Psoas muscle (tissue), 8 donors: ENCODE measurements at regions of chr13 and their contacts with region 1.

Region 1: DNA sequence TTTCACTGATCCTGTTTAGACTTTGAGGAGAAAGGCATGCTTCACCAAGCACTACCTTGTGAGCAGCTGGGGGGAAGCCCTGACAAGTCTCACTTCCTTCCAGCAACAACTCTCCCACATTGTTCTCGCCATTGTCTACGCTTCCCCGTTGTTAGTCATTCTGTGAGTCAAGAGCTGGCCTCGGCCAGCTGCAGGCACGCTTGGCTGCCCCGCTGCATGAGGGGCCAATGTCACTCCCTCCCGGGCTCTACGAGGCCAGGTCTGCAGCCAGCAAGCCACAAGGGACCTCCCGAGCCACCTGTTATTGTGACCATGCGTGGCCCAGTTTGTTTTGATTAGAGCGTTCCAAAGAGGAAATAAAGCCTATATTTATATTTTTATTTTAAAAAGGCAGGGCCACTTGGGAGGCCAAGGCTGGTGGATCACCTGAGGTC is 220.9 kb downstream of the FOXO1 start:
- DNase-seq: peak; percentile 72 to 90
- ATAC-seq: peak; percentile 77 to 91 (median 86)
- H3K4me3 ChIP-seq: no peak overlapping the region
- H3K27ac ChIP-seq: peak overlapping the region; percentile 66
- H3K4me1 ChIP-seq: peaks cover 24% of the 10 kb centered on the region
- H3K27me3 ChIP-seq: no peaks in the 10 kb centered on the region
- CTCF ChIP-seq: no peak

Region 2: GRCh38 chr13:40120288-40120687 is 325.3 kb before region 1 on chr13:
- intact Hi-C with region 1: no loop called
- DNase-seq: no peak
- ATAC-seq: no peak
- H3K4me3 ChIP-seq: no peak overlapping the region
- H3K27ac ChIP-seq: no peak overlapping the region
- H3K4me1 ChIP-seq: peaks cover 12% of the 10 kb centered on the region
- H3K27me3 ChIP-seq: no peaks in the 10 kb centered on the region
- CTCF ChIP-seq: no peak

Region 3: DNA sequence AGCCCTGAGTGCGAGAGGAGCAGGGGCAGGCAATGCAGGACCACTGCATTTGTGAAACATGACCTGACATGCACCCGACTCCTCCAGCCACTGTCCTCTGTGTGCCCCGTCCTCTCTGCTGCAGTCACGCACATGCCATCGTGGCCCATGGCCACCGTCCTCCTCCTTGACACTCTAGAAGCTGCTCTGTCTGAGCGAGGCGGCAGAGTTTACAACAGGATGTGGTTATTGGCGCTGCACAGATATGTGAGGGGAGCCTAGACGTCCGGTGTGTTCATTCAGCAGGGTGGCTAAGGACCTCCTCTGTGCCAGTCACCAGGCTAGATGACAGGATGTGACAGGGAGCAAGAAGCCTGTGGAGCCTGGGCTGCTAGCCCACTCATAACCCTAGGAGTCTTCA is 57.0 kb before region 1 on chr13:
- intact Hi-C with region 1: no loop called
- DNase-seq: no peak
- ATAC-seq: peak; percentile 55 to 90 (median 76)
- H3K4me3 ChIP-seq: no peak overlapping the region
- H3K27ac ChIP-seq: no peak overlapping the region
- H3K4me1 ChIP-seq: no peaks in the 10 kb centered on the region
- H3K27me3 ChIP-seq: no peaks in the 10 kb centered on the region
- CTCF ChIP-seq: no peak

Region 4: DNA sequence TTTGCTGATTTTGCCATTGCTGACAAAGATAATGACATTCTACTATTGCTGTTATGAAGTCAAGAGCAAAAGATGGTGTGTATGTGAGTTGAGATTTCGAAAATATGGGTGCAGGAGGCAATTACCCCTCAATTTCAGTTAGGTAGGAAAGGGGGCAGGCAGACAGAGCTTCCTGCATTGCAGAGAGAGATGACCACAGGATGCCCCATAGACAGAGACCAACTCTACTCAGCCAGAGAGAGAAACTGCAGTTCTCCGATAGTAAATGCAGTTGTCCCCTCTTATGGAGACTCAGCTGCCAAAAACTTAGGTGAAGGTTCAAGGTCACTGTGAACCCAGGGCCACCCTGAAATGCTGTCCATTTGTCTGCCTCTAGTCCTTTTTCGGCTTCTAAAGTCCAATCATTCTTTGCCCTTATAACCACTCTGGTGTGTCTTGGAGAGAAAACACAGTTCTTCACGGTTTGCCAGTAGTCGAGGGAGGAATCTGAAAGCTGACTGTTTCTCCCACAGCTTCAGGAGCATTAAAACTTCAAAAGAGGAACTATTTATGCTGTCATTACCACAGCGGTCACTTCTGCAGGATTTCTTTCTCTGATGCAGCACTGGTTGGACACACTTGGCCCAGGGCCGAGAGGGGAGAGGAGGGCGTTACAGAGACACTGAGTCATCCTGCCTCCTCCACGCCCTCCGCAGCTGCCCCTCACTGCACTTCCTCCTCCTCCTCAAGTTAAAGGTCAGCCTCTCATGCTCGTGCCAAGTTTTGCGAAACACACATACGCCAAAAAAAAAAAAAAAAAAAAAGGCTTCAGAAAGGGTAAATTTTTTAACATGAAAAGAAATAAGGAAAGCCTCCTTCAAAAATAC is 43.4 kb before region 1 on chr13:
- intact Hi-C with region 1: loop called in 1 of 2 experiments (anchors 5 kb)
- DNase-seq: peak; percentile 98
- ATAC-seq: peak; percentile 89 to 95 (median 92)
- H3K4me3 ChIP-seq: peak overlapping the region; percentile 37
- H3K27ac ChIP-seq: peak overlapping the region; percentile 50
- H3K4me1 ChIP-seq: peaks cover 32% of the 10 kb centered on the region
- H3K27me3 ChIP-seq: no peaks in the 10 kb centered on the region
- CTCF ChIP-seq: no peak

Region 5: GRCh38 chr13:40651866-40652587 is 206.5 kb after region 1 on chr13:
- intact Hi-C with region 1: no loop called
- DNase-seq: no peak
- ATAC-seq: no peak
- H3K4me3 ChIP-seq: no peak overlapping the region
- H3K27ac ChIP-seq: no peak overlapping the region
- H3K4me1 ChIP-seq: peaks cover 66% of the 10 kb centered on the region
- H3K27me3 ChIP-seq: no peaks in the 10 kb centered on the region
- CTCF ChIP-seq: no peak